Dendritic cell treated with granulocyte-macrophage colony-stimulating factor and Interleukin-4, amounts not matched to agents 40 ng/mL and 50 ng/mL, for 4 days (primary cell): ENCODE measurements at regions of chr3 and their contacts with region 1.

Region 1: GRCh38 chr3:183506674-183507320 is 48.7 kb downstream of the KLHL6 start:
- H3K4me3 Mint-ChIP-seq: no peak overlapping the region
- H3K27ac Mint-ChIP-seq: peak overlapping the region; percentile 85
- H3K4me1 Mint-ChIP-seq: peaks cover 46% of the 10 kb centered on the region
- H3K27me3 Mint-ChIP-seq: no peaks in the 10 kb centered on the region

Region 2: DNA sequence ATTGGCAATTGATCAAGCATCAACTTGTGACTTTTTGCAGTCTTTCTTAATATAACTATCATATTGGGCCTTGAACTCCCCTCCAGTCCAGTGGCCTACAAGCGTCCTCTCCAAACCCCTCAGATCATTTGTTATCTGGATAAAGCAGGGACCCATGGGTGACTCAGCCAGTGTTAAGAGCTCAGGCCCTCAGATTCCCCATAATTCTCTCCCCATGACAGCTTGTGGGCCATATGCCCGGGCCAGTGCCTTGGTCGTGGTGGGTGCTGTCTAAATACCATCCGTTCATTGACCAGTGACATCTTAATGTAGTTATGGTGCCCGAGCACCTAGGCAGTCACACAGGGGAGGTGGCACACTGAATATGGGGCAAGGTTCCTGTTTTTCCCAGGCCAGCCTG is 96.5 kb before region 1 on chr3:
- intact Hi-C with region 1: no loop called
- H3K4me3 Mint-ChIP-seq: no peak overlapping the region
- H3K27ac Mint-ChIP-seq: no peak overlapping the region
- H3K4me1 Mint-ChIP-seq: no peaks in the 10 kb centered on the region
- H3K27me3 Mint-ChIP-seq: peaks cover 2% of the 10 kb centered on the region

Region 3: GRCh38 chr3:183554377-183554776 is 47.6 kb after region 1 on chr3:
- intact Hi-C with region 1: loop called (anchors 5 kb)
- H3K4me3 Mint-ChIP-seq: peak overlapping the region; percentile 85
- H3K27ac Mint-ChIP-seq: peak overlapping the region; percentile 92
- H3K4me1 Mint-ChIP-seq: peaks cover 62% of the 10 kb centered on the region
- H3K27me3 Mint-ChIP-seq: no peaks in the 10 kb centered on the region